ENCODE measurements at regions of chr14 and their contacts with region 1.

Region 1: DNA sequence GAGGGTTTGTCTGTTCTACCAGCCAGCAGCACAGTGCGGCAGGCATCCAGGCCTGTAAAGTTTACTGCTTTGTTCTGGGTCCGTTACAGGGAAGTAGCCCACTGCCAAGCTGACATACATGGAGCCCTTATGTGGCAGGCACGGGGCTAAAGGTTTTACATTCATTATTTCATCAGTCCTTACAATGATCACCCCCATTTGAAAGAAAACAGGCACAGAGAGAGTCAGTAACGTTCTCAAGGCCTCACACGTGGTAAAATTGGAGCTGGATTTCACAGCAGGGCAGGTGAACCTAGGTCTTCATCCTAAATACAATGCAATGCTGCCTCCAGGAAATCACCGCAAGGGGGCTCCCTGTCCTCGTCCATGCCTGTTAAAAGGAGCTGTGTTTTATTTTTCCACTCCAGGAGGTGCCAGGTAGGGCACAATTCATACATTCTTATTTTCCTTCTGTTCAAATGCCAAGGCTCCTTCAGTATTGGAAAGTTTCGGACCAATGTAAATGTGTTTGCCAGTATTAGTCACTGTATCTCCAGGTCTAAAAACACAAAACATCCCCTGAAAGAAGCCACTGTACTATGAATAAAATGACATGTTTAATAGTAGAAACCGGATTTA is 172.2 kb upstream of the GZMB start:
- DNase-seq: peak; percentile 73 to 82
- H3K4me3 ChIP-seq: no peak overlapping the region
- H3K4me3 Mint-ChIP-seq: no peak overlapping the region
- H3K27ac Mint-ChIP-seq: peak overlapping the region; percentile 41
- H3K4me1 ChIP-seq: peaks cover 48% of the 10 kb centered on the region
- H3K4me1 Mint-ChIP-seq: peaks cover 22% of the 10 kb centered on the region
- H3K27me3 ChIP-seq: no peaks in the 10 kb centered on the region
- H3K27me3 Mint-ChIP-seq: no peaks in the 10 kb centered on the region
- CTCF ChIP-seq: peak; percentile 83 to 86

Region 2: DNA sequence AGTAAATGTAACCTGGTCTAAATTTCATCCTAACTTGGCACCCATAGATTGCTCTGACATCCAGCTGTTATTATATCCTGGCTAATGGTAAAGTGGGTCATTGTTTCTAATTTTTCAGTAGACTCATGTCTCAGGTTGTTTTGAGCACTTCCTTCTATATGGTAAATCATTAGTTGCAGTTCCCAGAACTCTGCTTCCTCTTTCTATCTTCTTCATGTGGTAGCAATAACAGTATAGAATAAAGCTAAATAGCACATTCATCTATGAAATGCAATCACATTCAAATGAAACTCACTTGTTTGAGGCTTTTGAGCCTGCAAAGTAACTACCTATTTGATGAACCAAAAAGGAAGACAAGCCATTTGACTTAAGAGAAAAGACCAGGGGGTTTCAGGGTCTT is 107.1 kb before region 1 on chr14:
- CTCF ChIA-PET with region 1: no interaction called
- POLR2A ChIA-PET with region 1: no interaction called
- intact Hi-C with region 1: no loop called
- DNase-seq: no peak
- H3K4me3 ChIP-seq: no peak overlapping the region
- H3K4me3 Mint-ChIP-seq: no peak overlapping the region
- H3K27ac Mint-ChIP-seq: no peak overlapping the region
- H3K4me1 ChIP-seq: no peaks in the 10 kb centered on the region
- H3K4me1 Mint-ChIP-seq: no peaks in the 10 kb centered on the region
- H3K27me3 ChIP-seq: no peaks in the 10 kb centered on the region
- H3K27me3 Mint-ChIP-seq: peaks cover 5% of the 10 kb centered on the region
- CTCF ChIP-seq: no peak

Region 3: GRCh38 chr14:24734878-24735500 is 71.2 kb before region 1 on chr14:
- CTCF ChIA-PET with region 1: no interaction called
- POLR2A ChIA-PET with region 1: no interaction called
- intact Hi-C with region 1: loop called (anchors 10 kb)
- DNase-seq: peak; percentile 42 to 66
- H3K4me3 ChIP-seq: no peak overlapping the region
- H3K4me3 Mint-ChIP-seq: no peak overlapping the region
- H3K27ac Mint-ChIP-seq: no peak overlapping the region
- H3K4me1 ChIP-seq: no peaks in the 10 kb centered on the region
- H3K4me1 Mint-ChIP-seq: no peaks in the 10 kb centered on the region
- H3K27me3 ChIP-seq: no peaks in the 10 kb centered on the region
- H3K27me3 Mint-ChIP-seq: no peaks in the 10 kb centered on the region
- CTCF ChIP-seq: peak; percentile 69 to 70

Region 4: DNA sequence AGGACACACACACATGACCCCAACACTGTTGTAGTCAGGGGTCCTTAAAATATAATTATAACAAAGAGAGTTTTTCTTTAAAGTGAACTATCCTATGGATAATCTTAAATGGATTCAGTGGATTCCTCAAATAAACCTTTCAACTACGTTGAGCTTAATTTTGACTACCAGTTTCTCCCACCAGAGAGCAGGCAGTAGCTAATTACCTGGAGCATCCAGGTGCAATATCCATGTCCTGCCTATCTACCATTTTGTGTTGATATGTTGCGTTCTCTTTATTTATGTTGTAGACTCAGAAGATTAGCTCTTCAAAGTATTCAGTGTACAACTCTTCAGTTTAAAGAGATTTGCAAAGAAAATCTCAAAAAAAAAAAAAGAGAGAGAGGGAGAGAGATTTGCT is 45.0 kb before region 1 on chr14:
- CTCF ChIA-PET with region 1: interaction called, 11 read pairs
- POLR2A ChIA-PET with region 1: no interaction called
- intact Hi-C with region 1: no loop called
- DNase-seq: peak in 1 of 2 experiments; percentile 20
- H3K4me3 ChIP-seq: no peak overlapping the region
- H3K4me3 Mint-ChIP-seq: no peak overlapping the region
- H3K27ac Mint-ChIP-seq: no peak overlapping the region
- H3K4me1 ChIP-seq: no peaks in the 10 kb centered on the region
- H3K4me1 Mint-ChIP-seq: no peaks in the 10 kb centered on the region
- H3K27me3 ChIP-seq: no peaks in the 10 kb centered on the region
- H3K27me3 Mint-ChIP-seq: peaks cover 8% of the 10 kb centered on the region
- CTCF ChIP-seq: peak in 1 of 2 experiments; percentile 47

Region 5: DNA sequence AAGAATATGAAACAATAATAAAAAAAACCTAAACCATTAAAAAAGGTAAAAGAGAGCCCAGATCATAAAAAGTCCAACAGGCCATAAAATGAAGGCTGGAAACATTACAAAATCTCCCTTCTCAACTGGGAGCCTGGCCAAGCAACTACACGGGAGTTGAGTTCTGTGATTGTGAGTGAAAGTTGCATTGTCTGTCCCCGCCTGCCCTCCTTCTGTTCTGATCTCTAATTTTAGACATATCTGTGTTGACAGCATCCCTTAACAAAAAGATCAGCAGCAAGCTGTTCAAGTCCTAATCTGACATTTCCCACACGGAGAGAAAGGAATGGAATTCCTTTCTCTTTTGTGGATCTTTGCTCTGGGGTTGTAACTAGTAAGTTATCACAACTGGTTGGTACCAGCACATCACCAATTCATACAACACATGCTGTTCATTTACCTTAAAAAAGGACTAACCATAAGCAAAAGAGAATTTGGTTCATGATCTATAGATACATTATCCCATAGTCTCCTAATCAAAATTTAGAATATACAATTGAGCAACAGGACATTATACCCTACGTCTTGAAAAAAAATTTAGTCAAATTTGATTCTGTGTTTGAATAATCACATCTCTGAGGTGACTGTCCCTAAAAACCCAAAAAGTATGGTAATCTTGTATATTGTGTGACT is 32.9 kb after region 1 on chr14:
- CTCF ChIA-PET with region 1: interaction called, 11 read pairs
- POLR2A ChIA-PET with region 1: no interaction called
- intact Hi-C with region 1: no loop called
- DNase-seq: peak in 1 of 2 experiments; percentile 36
- H3K4me3 ChIP-seq: no peak overlapping the region
- H3K4me3 Mint-ChIP-seq: peak overlapping the region; percentile 49
- H3K27ac Mint-ChIP-seq: peak overlapping the region; percentile 82
- H3K4me1 ChIP-seq: peaks cover 61% of the 10 kb centered on the region
- H3K4me1 Mint-ChIP-seq: peaks cover 36% of the 10 kb centered on the region
- H3K27me3 ChIP-seq: no peaks in the 10 kb centered on the region
- H3K27me3 Mint-ChIP-seq: no peaks in the 10 kb centered on the region
- CTCF ChIP-seq: no peak

Region 6: GRCh38 chr14:25042362-25043299 is 236.5 kb after region 1 on chr14:
- CTCF ChIA-PET with region 1: interaction called, 11 read pairs
- POLR2A ChIA-PET with region 1: no interaction called
- intact Hi-C with region 1: loop called (anchors 1 kb)
- DNase-seq: peak; percentile 55 to 56
- H3K4me3 ChIP-seq: no peak overlapping the region
- H3K4me3 Mint-ChIP-seq: no peak overlapping the region
- H3K27ac Mint-ChIP-seq: peak overlapping the region; percentile 44
- H3K4me1 ChIP-seq: no peaks in the 10 kb centered on the region; the same call in 1 of the 2 replicates
- H3K4me1 Mint-ChIP-seq: peaks cover 22% of the 10 kb centered on the region
- H3K27me3 ChIP-seq: no peaks in the 10 kb centered on the region
- H3K27me3 Mint-ChIP-seq: no peaks in the 10 kb centered on the region
- CTCF ChIP-seq: peak; percentile 54 to 79